CD8-positive, alpha-beta memory T cell (primary cell): ENCODE measurements at regions of chr17 and their contacts with region 1.

Region 1: GRCh38 chr17:56779898-56780733 is 53.6 kb downstream of the C17orf67 start:
- DNase-seq: peak; percentile 72 to 86 (median 78)
- H3K4me3 ChIP-seq: peak overlapping the region; percentile 78
- H3K4me3 Mint-ChIP-seq: peak overlapping the region; percentile 81 to 96 (median 92)
- H3K27ac ChIP-seq: no peak overlapping the region
- H3K27ac Mint-ChIP-seq: peak overlapping the region; percentile 74 to 98 (median 92)
- H3K4me1 ChIP-seq: peaks cover 15% of the 10 kb centered on the region
- H3K4me1 Mint-ChIP-seq: peaks cover 14 to 20% (median 16%) of the 10 kb centered on the region in 3 donors
- H3K27me3 ChIP-seq: peaks cover 6% of the 10 kb centered on the region
- H3K27me3 Mint-ChIP-seq: peaks cover 3 to 5% of the 10 kb centered on the region in 2 donors

Region 2: GRCh38 chr17:56715613-56716357 is 64.3 kb before region 1 on chr17:
- CTCF ChIA-PET with region 1: interaction called, 13 read pairs
- POLR2A ChIA-PET with region 1: no interaction called
- DNase-seq: peak; percentile 41 to 74 (median 53)
- H3K4me3 ChIP-seq: no peak overlapping the region
- H3K4me3 Mint-ChIP-seq: no peak overlapping the region
- H3K27ac ChIP-seq: no peak overlapping the region
- H3K27ac Mint-ChIP-seq: no peak overlapping the region
- H3K4me1 ChIP-seq: no peaks in the 10 kb centered on the region
- H3K4me1 Mint-ChIP-seq: no peaks in the 10 kb centered on the region
- H3K27me3 ChIP-seq: no peaks in the 10 kb centered on the region
- H3K27me3 Mint-ChIP-seq: peaks cover 5 to 9% of the 10 kb centered on the region in 2 donors

Region 3: DNA sequence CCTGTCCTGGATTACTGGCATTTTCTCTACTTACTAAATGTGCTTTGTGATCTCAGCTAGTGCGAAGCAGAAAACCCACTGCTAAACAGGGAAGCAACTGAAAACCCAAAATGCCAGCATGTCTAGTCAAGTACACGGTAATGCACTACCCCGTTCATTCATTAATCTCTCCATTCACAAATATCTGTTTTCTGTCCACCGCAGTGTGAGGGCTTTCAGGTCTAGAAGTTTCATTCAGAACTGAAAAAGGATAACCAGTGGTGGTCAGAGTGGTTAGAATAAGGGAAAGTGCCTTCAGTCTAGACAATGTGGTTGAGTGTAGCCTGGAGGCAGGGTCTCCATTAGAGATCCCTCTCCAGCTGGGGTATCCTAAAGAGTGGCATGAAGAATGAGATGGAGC is 14.7 kb before region 1 on chr17:
- CTCF ChIA-PET with region 1: interaction called, 18 read pairs
- POLR2A ChIA-PET with region 1: no interaction called
- DNase-seq: no peak
- H3K4me3 ChIP-seq: no peak overlapping the region
- H3K4me3 Mint-ChIP-seq: no peak overlapping the region
- H3K27ac ChIP-seq: no peak overlapping the region
- H3K27ac Mint-ChIP-seq: no peak overlapping the region
- H3K4me1 ChIP-seq: peaks cover 11% of the 10 kb centered on the region
- H3K4me1 Mint-ChIP-seq: no peaks in the 10 kb centered on the region
- H3K27me3 ChIP-seq: peaks cover 9% of the 10 kb centered on the region
- H3K27me3 Mint-ChIP-seq: peaks cover 5 to 25% of the 10 kb centered on the region in 2 donors